Astrocyte of the cerebellum (primary cell): ENCODE measurements at regions of chr12 and their contacts with region 1.

Region 1: GRCh38 chr12:94731733-94732360 is 81.5 kb upstream of the TMCC3 start:
- DNase-seq: no peak
- H3K4me3 ChIP-seq: no peak overlapping the region
- CTCF ChIP-seq: no peak

Region 2: DNA sequence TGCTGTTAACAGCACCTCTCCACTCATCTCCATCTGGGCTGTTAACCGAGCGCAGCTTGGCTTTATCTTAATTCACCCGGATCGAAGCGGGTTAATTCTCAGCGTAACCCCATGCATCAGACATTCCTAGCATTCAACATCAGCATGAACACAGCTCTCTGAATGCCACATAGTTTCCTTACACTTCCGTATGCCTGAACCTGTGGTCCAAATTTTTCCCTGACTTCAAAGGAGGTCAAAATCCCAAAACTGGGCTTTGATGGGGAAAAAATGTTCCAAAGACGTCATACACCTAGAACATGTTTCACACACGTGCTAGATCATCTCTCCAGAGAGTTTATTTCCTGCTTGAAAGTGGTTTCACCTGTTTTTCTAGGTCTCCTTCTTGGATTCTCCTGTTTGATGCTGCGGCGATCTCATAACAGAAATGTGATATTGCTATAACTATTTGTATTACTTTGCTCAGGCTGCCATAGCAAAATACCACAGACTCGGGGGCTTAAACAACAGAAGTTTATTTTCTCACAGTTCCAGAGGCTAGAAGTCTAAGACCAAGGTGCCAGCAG is 61.9 kb before region 1 on chr12:
- in situ Hi-C with region 1: loop called (anchors 5 kb)
- DNase-seq: no peak
- H3K4me3 ChIP-seq: no peak overlapping the region
- CTCF ChIP-seq: no peak

Region 3: DNA sequence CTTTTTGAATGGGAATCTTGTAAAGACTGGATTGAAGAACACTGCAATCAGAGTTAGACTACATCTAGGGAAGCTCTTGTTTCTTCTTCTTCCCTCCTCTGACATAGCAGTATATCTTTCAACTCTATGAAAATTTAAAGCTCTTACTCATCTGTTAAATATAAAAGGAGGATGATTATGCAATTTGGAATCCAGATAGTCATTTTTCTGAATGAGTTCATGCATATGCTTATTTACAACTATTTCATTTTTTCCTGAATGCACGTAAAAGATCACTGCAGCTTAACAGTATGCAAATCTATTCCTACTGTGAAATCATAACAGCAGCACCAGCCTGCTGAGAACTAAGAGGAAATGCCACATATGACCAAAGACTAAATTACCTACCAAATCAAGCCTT is 52.0 kb after region 1 on chr12:
- in situ Hi-C with region 1: no loop called
- DNase-seq: no peak
- H3K4me3 ChIP-seq: no peak overlapping the region
- CTCF ChIP-seq: no peak